HEK293T (cell line): ENCODE measurements at regions of chr19 and their contacts with region 1.

Region 1: DNA sequence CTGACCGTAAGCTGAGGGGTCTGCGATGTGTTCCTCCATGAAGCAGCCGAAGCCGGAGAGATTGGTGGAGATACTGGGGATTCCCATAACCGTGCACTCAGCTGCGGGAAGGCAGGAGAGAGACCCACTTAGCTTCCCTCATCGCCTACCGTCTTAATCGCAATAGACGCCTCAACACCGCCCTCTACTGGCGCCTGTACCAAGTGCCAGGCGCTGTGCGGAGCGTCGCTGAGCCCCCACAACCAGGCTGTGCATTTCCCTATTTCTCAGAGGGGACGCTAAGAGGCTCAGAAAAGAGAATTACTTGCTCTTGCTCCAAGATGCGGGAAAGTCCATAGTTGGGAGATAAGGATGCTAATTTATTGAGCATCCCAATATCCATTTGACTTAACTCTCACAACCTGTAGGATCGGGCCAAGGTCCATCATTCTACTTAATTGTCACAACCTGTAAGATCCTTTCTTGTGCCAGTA is 5.8 kb downstream of the FTL start:
- DNase-seq: peak; percentile 79

Region 2: DNA sequence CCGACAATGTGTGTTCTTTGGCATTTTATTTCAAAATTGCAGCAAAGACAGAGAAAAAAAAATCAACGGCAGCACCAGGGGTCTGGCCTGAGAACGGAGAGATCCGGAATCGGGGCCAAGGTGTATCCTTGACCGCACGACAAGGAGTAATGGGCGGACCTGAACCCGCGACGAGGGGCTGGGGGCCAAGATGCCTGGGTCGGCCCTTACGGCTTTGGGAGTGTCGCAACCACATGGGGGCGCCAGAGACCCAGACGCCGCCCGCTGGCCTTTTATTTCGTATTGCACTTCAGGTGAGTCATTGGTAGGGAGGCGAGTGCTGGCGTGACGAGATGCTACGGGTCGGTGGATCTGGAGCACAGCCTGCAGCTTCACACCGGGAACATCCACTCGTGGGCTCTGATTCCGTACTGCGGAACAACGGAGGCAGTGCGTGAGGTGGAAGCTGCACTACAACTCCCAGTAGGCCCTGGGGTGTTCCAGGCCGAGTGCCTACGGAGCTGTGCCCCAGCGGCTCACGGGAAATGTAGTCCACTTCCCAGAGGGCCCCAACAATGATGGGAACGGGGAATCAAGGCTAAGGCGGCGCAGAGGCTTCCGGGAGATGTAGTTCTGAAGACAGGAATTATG is 175.8 kb before region 1 on chr19:
- CTCF ChIA-PET with region 1: interaction called, 10 read pairs
- POLR2A ChIA-PET with region 1: interaction called, 3 read pairs
- DNase-seq: peak; percentile 92

Region 3: DNA sequence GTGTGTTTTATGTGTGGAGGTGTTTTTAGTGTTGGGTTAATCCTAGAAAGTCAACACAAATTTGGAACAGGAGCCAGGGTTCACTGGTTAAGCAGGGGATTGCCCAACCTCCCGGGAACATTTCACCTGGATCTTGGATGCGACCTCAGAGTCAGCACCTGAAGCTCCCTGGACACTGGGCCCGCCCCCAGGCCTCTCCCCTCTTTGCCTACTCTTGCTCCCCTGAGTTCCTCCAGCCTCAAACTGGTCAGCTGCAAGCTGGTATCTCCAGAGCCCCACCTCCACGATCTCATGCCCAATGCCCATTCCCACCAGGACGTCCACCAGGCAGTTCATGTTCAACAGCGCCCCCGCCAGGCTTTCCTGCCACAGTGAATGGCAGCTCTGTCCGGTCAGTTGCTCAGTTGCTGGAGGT is 144.3 kb before region 1 on chr19:
- CTCF ChIA-PET with region 1: no interaction called
- POLR2A ChIA-PET with region 1: no interaction called
- DNase-seq: no peak

Region 4: DNA sequence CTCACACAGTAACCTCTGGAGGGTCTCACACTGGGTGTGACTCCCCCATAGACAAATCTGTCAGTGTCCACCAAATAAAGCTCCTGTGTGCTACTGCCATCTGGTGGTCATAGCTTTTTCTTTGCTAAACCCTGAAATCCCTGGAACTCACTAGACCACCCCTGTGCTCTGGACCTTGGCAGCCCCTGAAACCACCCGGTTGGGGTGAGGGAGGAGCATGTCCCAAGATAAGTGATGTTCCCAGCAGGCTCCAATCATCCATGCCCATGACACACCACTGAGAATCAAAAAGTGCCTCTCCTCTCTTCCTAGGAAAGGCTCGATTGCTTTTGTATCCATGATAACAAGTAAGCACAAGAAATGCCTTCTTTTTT is 128.2 kb before region 1 on chr19:
- CTCF ChIA-PET with region 1: interaction called, 10 read pairs
- POLR2A ChIA-PET with region 1: no interaction called
- DNase-seq: peak; percentile 62

Region 5: DNA sequence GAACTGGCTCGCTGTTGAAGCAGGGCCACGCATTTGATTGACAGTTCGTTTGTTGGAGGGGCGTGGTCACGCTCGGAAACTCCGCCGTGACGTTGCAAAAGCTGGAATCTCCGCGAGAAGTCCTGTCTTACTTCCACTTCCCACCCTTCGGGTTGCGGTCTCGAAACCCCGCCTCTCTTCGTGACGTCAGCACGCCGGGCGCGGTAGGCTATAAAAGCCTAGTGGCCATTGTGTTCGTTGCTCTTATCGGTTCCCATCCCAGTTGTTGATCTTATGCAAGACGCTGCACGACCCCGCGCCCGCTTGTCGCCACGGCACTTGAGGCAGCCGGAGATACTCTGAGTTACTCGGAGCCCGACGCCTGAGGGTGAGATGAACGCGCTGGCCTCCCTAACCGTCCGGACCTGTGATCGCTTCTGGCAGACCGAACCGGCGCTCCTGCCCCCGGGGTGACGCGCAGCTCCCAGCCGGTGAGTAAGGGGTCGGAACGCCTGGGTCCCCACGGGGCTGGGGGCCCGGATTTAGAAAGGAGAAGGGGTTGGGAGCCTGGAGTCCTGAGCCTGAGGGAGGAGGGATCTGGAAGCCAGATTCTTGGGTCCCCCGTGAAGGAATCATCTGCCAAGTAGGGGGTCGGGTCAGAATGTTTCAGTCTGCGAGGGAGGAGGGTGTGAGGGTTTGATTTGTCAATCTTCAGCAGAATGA is 98.6 kb before region 1 on chr19 and contains the start of gene PPP1R15A:
- CTCF ChIA-PET with region 1: no interaction called
- POLR2A ChIA-PET with region 1: interaction called, 13 read pairs
- DNase-seq: peak; percentile 98

Region 6: GRCh38 chr19:48954595-48955310 is 16.2 kb before region 1 on chr19 and contains the start of gene BAX:
- CTCF ChIA-PET with region 1: interaction called, 10 read pairs
- POLR2A ChIA-PET with region 1: interaction called, 7 read pairs
- DNase-seq: peak; percentile 98